ENCODE measurements at regions of chr2 and their contacts with region 1.

Region 1: GRCh38 chr2:179106676-179107428 is 56.9 kb upstream of the CCDC141 start:
- DNase-seq: no peak
- ATAC-seq: peak; percentile 36
- H3K4me3 ChIP-seq: no peak overlapping the region
- H3K4me3 Mint-ChIP-seq: peak overlapping the region in 4 of 10 donors; percentile 7 to 70 (median 50)
- H3K27ac ChIP-seq: no peak overlapping the region
- H3K27ac Mint-ChIP-seq: peak overlapping the region in 6 of 9 donors; percentile 25 to 87 (median 50)
- H3K4me1 ChIP-seq: peaks cover 0 to 18% of the 10 kb centered on the region in 2 donors
- H3K4me1 Mint-ChIP-seq: peaks cover 10 to 41% (median 26%) of the 10 kb centered on the region in 7 donors
- H3K27me3 ChIP-seq: no peaks in the 10 kb centered on the region
- H3K27me3 Mint-ChIP-seq: no peaks in the 10 kb centered on the region

Region 2: GRCh38 chr2:179059026-179059700 is 47.7 kb before region 1 on chr2:
- CTCF ChIA-PET with region 1: no interaction called
- POLR2A ChIA-PET with region 1: no interaction called
- intact Hi-C with region 1: no loop called
- DNase-seq: no peak
- ATAC-seq: no peak
- H3K4me3 ChIP-seq: no peak overlapping the region
- H3K4me3 Mint-ChIP-seq: no peak overlapping the region
- H3K27ac ChIP-seq: no peak overlapping the region
- H3K27ac Mint-ChIP-seq: peak overlapping the region in 4 of 9 donors; percentile 5 to 58 (median 14)
- H3K4me1 ChIP-seq: no peaks in the 10 kb centered on the region
- H3K4me1 Mint-ChIP-seq: peaks cover 0 to 7% (median 0%) of the 10 kb centered on the region in 7 donors
- H3K27me3 ChIP-seq: no peaks in the 10 kb centered on the region
- H3K27me3 Mint-ChIP-seq: no peaks in the 10 kb centered on the region

Region 3: DNA sequence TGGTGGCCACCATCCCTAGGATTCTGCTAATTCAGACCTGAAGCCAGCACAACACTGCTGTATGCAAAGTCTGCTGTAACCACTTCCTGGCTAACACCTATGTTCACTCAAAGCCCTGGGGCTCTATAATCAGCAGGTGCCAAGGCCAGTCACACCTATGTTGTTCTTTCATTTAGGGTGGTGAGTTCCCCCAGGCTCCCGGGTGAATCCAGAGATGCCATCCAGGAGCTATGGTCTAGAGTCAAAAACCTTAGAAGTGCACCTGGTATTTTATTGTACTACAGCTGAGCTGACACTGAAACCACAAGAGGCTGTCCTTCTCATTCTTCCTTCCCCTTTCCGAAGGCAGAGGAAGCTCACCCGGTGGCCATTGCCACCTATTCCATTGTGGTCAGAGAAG is 10.8 kb before region 1 on chr2:
- CTCF ChIA-PET with region 1: interaction called, 3 read pairs
- POLR2A ChIA-PET with region 1: interaction called, 3 read pairs
- intact Hi-C with region 1: loop called in 1 of 2 experiments (anchors 1 kb)
- DNase-seq: peak in 6 of 9 donors; percentile 8 to 33 (median 25)
- ATAC-seq: peak; percentile 65
- H3K4me3 ChIP-seq: peak overlapping the region; percentile 27
- H3K4me3 Mint-ChIP-seq: peak overlapping the region; percentile 3 to 64 (median 26)
- H3K27ac ChIP-seq: no peak overlapping the region
- H3K27ac Mint-ChIP-seq: peak overlapping the region in 8 of 9 donors; percentile 3 to 77 (median 31)
- H3K4me1 ChIP-seq: peaks cover 9 to 14% of the 10 kb centered on the region in 2 donors
- H3K4me1 Mint-ChIP-seq: peaks cover 7 to 34% (median 21%) of the 10 kb centered on the region in 7 donors
- H3K27me3 ChIP-seq: no peaks in the 10 kb centered on the region
- H3K27me3 Mint-ChIP-seq: no peaks in the 10 kb centered on the region

Region 4: GRCh38 chr2:179123272-179123662 is 16.4 kb after region 1 on chr2:
- CTCF ChIA-PET with region 1: interaction called, 3 read pairs
- POLR2A ChIA-PET with region 1: no interaction called
- intact Hi-C with region 1: loop called in 1 of 2 experiments (anchors 2 kb)
- DNase-seq: no peak
- ATAC-seq: no peak
- H3K4me3 ChIP-seq: no peak overlapping the region
- H3K4me3 Mint-ChIP-seq: no peak overlapping the region
- H3K27ac ChIP-seq: no peak overlapping the region
- H3K27ac Mint-ChIP-seq: no peak overlapping the region
- H3K4me1 ChIP-seq: no peaks in the 10 kb centered on the region
- H3K4me1 Mint-ChIP-seq: peaks cover 0 to 13% (median 9%) of the 10 kb centered on the region in 7 donors
- H3K27me3 ChIP-seq: no peaks in the 10 kb centered on the region
- H3K27me3 Mint-ChIP-seq: no peaks in the 10 kb centered on the region

Region 5: GRCh38 chr2:179850188-179850587 is 743.3 kb after region 1 on chr2:
- CTCF ChIA-PET with region 1: no interaction called
- POLR2A ChIA-PET with region 1: no interaction called
- intact Hi-C with region 1: no loop called
- DNase-seq: no peak
- ATAC-seq: no peak
- H3K4me3 ChIP-seq: no peak overlapping the region
- H3K4me3 Mint-ChIP-seq: no peak overlapping the region
- H3K27ac ChIP-seq: no peak overlapping the region
- H3K27ac Mint-ChIP-seq: no peak overlapping the region
- H3K4me1 ChIP-seq: no peaks in the 10 kb centered on the region
- H3K4me1 Mint-ChIP-seq: no peaks in the 10 kb centered on the region
- H3K27me3 ChIP-seq: no peaks in the 10 kb centered on the region
- H3K27me3 Mint-ChIP-seq: peaks cover 7 to 27% (median 24%) of the 10 kb centered on the region in 5 donors